Kidney (tissue), 22 donors: ENCODE measurements at regions of chr11 and their contacts with region 1.

Region 1: DNA sequence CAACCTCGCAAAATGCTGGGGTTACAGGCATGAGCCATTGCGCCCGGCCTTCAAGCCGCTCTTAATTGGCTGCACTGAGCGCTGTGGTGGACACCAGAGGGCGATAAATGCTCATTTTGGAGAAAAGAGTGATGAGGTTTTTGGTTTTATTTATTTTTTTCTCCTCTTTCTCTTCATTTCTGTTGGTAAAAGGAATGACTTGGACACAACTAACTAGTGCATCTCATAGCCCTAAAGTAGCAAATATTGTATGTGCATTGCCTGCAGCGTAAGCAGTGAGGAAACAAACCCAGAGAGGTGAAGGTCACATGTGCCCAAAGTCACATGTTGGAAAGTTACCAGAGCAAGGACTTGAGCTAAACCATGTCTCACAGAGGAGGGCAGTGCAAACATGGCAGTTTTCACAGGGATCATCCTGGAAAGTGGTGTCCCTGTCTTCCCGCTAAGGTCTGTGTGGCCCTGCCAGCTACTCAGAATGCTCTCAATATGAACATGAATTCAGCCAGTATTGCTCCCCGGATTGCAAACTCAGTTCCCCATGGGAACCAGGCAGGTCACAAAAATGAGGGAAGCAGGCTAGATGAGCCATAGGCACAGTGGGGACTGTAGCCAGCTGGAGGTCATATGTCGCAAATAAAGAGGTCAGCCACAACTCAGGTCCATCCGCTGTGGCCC is 8.6 kb upstream of the CD82 start:
- DNase-seq: peak in 3 of 5 donors; percentile 63 to 84 (median 74)
- H3K4me3 ChIP-seq: no peak overlapping the region
- H3K27ac ChIP-seq: no peak overlapping the region
- H3K4me1 ChIP-seq: peaks cover 0 to 4% (median 0%) of the 10 kb centered on the region in 3 donors
- H3K27me3 ChIP-seq: no peaks in the 10 kb centered on the region
- CTCF ChIP-seq: peak; percentile 82

Region 2: DNA sequence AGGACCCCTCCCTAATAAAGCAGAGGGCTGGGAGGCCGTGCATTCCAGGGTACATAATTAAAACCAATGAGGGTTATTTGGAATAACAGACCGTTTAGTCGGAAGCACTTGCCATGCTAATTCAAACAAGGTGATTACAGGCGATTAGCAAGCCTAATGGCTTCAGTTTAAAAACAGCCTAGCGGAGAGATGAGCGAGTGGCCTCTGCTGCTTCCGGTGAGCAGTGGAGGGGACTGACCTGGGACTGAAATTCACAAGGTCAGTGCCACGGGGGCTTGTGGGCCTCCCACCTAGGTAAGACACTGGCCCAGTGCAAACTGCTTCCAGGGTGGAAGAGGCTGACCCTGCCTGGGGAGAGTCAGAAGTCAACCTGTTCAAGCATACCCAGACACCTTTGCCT is 190.1 kb before region 1 on chr11:
- intact Hi-C with region 1: no loop called
- DNase-seq: no peak
- H3K4me3 ChIP-seq: no peak overlapping the region
- H3K27ac ChIP-seq: no peak overlapping the region
- H3K4me1 ChIP-seq: no peaks in the 10 kb centered on the region
- H3K27me3 ChIP-seq: no peaks in the 10 kb centered on the region
- CTCF ChIP-seq: no peak

Region 3: GRCh38 chr11:44416776-44417175 is 140.1 kb before region 1 on chr11:
- intact Hi-C with region 1: no loop called
- DNase-seq: peak in 1 of 5 donors; percentile 2
- H3K4me3 ChIP-seq: no peak overlapping the region
- H3K27ac ChIP-seq: no peak overlapping the region
- H3K4me1 ChIP-seq: no peaks in the 10 kb centered on the region
- H3K27me3 ChIP-seq: no peaks in the 10 kb centered on the region
- CTCF ChIP-seq: no peak

Region 4: DNA sequence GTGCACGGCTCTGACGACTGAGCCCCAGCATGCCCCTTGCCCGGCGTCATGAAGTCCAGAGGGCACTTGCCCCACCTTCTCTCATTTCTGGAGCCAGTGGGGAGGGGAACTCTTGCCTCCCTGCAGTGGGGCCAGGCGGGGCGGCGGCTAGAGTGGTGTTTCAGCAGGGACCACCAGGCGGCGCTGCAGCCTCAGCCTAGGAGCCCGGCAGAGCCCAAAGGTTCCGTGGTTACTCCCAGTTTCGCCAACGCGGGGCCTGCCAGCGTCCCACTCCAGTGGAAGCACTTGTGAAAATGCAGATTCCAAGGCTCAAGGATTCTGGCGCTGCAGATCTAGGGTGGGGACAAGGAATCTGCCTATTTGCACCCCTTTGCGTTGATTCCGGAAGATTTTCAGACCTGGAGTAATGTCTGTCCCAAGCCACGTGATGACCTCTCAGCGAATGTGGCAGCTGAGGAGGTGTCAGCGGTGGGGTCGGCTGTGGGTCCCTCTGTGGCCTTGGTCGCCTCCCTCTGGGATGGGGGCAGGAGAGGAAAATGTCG is 64.3 kb after region 1 on chr11:
- intact Hi-C with region 1: loop called (anchors 5 kb)
- DNase-seq: peak; percentile 84 to 89 (median 88)
- H3K4me3 ChIP-seq: peak overlapping the region; percentile 21 to 55 (median 33)
- H3K27ac ChIP-seq: no peak overlapping the region
- H3K4me1 ChIP-seq: peaks cover 0 to 9% (median 0%) of the 10 kb centered on the region in 3 donors
- H3K27me3 ChIP-seq: no peaks in the 10 kb centered on the region
- CTCF ChIP-seq: peak; percentile 92

Region 5: GRCh38 chr11:44727373-44728287 is 170.8 kb after region 1 on chr11:
- intact Hi-C with region 1: no loop called
- DNase-seq: peak; percentile 84 to 92 (median 90)
- H3K4me3 ChIP-seq: peak overlapping the region; percentile 30 to 61 (median 48)
- H3K27ac ChIP-seq: peak overlapping the region; percentile 3 to 57
- H3K4me1 ChIP-seq: peaks cover 0 to 12% (median 8%) of the 10 kb centered on the region in 3 donors
- H3K27me3 ChIP-seq: no peaks in the 10 kb centered on the region
- CTCF ChIP-seq: peak; percentile 86

Region 6: GRCh38 chr11:44899959-44900358 is 343.1 kb after region 1 on chr11:
- intact Hi-C with region 1: loop called (anchors 10 kb)
- DNase-seq: peak in 1 of 5 donors; percentile 56
- H3K4me3 ChIP-seq: no peak overlapping the region
- H3K27ac ChIP-seq: no peak overlapping the region
- H3K4me1 ChIP-seq: no peaks in the 10 kb centered on the region
- H3K27me3 ChIP-seq: no peaks in the 10 kb centered on the region
- CTCF ChIP-seq: no peak